MCF 10A (cell line): ENCODE measurements at regions of chr3 and their contacts with region 1.

Region 1: DNA sequence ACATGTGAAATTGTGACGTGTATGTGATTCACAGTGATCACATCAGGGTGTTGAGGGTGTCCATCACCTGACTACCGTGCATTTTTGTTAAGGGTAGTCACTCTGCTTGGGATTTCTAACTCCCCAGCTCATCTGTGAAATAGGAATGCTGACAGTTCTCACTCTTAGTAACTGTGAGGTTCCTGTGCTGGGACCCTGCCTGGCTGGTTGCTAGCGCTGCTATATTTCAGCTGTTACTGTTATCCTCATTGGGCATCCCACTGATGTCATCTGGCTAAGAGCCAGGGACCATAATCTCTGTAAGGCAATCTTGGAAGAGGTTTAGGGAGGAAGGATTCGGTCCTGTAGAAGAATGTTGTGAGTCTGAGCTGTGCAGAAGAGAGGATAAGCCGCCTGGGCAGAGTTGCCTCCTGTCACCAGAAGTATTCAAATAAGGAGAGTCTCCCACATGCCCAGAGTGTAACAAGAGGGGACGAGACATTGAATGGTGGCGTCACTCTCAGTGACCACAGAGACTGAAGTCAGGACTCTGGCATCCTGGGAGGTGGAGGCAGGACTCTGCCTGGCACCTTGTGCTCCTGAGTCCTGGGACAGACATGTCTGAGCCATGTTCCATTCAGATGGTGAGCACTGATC is 52.1 kb downstream of the FBLN2 start:
- DNase-seq: peak; percentile 66
- H3K4me3 Mint-ChIP-seq: no peak overlapping the region
- H3K27ac Mint-ChIP-seq: peak overlapping the region; percentile 95
- H3K4me1 Mint-ChIP-seq: peaks cover 36% of the 10 kb centered on the region
- H3K27me3 Mint-ChIP-seq: no peaks in the 10 kb centered on the region
- CTCF ChIP-seq: no peak

Region 2: DNA sequence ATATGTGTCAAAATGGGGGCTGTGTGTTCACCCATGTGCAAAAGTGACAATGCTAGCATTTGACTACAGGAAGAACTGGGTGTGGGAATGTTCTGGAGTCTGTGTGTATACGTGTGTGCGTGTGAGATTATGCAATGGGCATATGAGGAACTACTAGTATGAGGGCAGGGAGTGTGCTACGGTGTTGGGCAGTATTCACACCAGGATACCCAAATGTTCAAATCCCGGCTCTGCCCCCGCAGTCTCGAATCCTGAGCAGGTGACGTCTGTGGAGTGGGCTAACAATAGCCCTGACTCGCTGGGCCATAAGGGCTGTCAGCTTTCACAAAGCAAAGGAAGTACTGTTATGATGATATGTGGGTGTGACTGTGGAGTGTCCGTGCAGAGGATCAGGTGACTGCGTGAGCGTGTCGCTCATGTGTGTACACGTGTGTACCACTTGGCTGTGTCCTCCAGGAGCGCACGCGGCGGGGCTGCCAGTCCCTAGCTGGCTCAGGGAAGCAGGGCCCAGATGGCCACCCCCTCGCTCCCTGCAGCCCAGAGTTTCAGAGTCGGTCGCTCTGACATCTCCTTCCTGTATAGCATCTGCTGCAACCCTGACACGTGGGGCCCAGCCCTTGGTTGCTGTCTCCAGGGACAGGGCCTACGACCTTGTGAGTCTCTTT is 555.0 kb before region 1 on chr3:
- CTCF ChIA-PET with region 1: no interaction called
- POLR2A ChIA-PET with region 1: no interaction called
- intact Hi-C with region 1: no loop called
- DNase-seq: no peak
- H3K4me3 Mint-ChIP-seq: no peak overlapping the region
- H3K27ac Mint-ChIP-seq: no peak overlapping the region
- H3K4me1 Mint-ChIP-seq: no peaks in the 10 kb centered on the region
- H3K27me3 Mint-ChIP-seq: peaks cover 4% of the 10 kb centered on the region
- CTCF ChIP-seq: no peak

Region 3: DNA sequence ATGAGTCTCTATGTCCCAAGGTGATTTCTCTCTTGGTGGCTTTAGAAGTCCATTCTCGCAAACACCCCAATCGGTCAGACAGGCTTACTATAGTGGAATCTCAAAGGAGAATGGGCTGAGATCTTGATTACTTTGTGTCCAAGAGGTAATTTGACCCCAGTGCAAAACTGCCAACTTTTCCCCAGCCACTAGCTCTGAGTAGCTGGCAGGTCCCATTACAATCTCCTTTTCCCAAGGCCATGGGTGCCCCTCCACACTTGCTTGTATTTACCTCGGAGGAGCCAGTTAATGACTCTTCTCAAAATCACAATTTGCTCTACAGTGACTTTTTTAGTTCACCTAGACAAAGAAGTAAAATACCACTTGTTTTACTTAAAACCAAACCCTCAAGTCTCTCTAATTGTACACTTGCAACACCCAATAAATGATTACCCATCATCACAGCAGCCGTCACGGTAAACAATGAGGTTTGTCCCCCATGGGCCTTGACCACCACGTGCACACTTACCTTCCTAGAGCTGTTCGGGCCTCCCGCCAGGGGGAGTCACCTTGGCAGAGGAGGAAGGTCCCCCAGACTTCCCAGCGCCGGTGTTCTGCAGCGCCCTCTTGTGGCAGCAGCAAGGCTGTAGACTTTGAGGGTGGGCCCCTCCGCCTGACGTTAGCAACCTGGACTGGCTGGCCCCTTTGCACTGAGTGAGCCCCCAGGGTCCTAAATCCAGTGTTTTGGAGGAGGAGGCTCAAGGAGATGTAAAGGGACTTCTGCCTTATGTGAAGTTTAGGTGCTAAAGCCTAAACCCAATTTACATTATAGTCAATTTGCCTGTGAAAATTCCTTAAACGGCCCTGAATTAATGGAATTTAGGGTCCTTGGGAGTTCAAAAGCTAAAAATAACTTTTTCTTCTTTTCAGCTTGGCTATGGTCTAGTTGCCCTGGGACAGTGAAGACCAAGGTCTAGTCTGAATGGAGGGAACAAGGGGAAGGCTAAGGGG is 139.6 kb before region 1 on chr3:
- CTCF ChIA-PET with region 1: no interaction called
- POLR2A ChIA-PET with region 1: no interaction called
- intact Hi-C with region 1: no loop called
- DNase-seq: peak; percentile 55
- H3K4me3 Mint-ChIP-seq: no peak overlapping the region
- H3K27ac Mint-ChIP-seq: no peak overlapping the region
- H3K4me1 Mint-ChIP-seq: no peaks in the 10 kb centered on the region
- H3K27me3 Mint-ChIP-seq: peaks cover 11% of the 10 kb centered on the region
- CTCF ChIP-seq: peak; percentile 41

Region 4: DNA sequence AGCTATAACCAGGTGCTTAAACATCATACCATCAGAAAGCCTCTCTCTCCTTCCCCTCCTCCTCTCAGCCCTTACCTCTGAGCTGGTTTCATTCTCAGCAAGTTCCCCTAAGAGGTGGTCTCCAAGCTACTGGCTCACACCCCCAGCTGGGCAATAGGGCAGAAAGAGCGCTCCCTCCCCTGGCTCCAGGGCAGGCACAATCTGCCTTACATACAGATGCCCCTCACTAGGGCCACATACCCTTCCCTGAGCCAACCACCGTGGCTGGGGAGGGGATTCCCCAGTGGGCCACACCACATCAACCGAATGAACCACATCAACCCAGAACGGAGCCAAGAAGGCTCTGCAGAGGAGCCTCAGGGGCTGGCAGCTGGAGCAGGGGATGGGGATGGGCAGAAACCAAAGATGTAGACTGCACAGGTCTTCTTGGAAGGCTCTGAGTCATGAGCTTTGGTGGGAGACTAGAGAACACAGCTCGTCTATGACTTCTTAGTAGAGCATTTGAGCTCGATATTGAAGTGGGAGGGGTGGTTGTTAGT is 56.7 kb before region 1 on chr3:
- CTCF ChIA-PET with region 1: no interaction called
- POLR2A ChIA-PET with region 1: no interaction called
- intact Hi-C with region 1: loop called (anchors 5 kb)
- DNase-seq: peak; percentile 92
- H3K4me3 Mint-ChIP-seq: no peak overlapping the region
- H3K27ac Mint-ChIP-seq: peak overlapping the region; percentile 74
- H3K4me1 Mint-ChIP-seq: peaks cover 33% of the 10 kb centered on the region
- H3K27me3 Mint-ChIP-seq: no peaks in the 10 kb centered on the region
- CTCF ChIP-seq: no peak